ENCODE measurements at regions of chr3 and their contacts with region 1.

Region 1: GRCh38 chr3:16520970-16521881 is 7.7 kb upstream of the RFTN1 start:
- DNase-seq: peak; percentile 53
- H3K4me3 Mint-ChIP-seq: no peak overlapping the region
- H3K27ac Mint-ChIP-seq: peak overlapping the region; percentile 87
- H3K4me1 Mint-ChIP-seq: peaks cover 67% of the 10 kb centered on the region
- H3K27me3 Mint-ChIP-seq: no peaks in the 10 kb centered on the region

Region 2: GRCh38 chr3:15319575-15319974 is 1201.7 kb before region 1 on chr3:
- CTCF ChIA-PET with region 1: no interaction called
- intact Hi-C with region 1: loop called (anchors 10 kb)
- DNase-seq: no peak
- H3K4me3 Mint-ChIP-seq: no peak overlapping the region
- H3K27ac Mint-ChIP-seq: no peak overlapping the region
- H3K4me1 Mint-ChIP-seq: peaks cover 60% of the 10 kb centered on the region
- H3K27me3 Mint-ChIP-seq: no peaks in the 10 kb centered on the region

Region 3: GRCh38 chr3:16012086-16012485 is 509.1 kb before region 1 on chr3:
- CTCF ChIA-PET with region 1: no interaction called
- intact Hi-C with region 1: no loop called
- DNase-seq: no peak
- H3K4me3 Mint-ChIP-seq: no peak overlapping the region
- H3K27ac Mint-ChIP-seq: no peak overlapping the region
- H3K4me1 Mint-ChIP-seq: no peaks in the 10 kb centered on the region
- H3K27me3 Mint-ChIP-seq: peaks cover 3% of the 10 kb centered on the region

Region 4: DNA sequence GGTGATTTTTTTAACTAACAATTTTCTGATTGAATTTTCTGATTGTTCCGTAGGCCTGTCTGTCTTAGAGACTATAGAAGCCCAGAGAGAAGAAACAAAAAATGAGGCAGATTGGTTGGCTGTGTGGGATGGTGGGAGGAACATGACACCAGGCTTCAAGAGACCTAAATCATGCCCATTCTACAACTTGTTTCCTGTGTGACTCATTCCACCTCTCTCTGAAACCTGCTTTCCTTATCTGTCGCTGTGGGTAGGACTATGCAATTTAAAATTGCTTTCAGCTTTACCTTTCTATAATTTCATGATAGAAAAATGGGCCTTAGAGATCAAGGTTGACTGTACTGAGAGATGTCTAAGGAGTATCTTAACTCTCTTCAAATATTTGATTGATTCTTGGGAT is 211.7 kb before region 1 on chr3:
- CTCF ChIA-PET with region 1: no interaction called
- intact Hi-C with region 1: loop called (anchors 1 kb)
- DNase-seq: peak; percentile 76
- H3K4me3 Mint-ChIP-seq: peak overlapping the region; percentile 22
- H3K27ac Mint-ChIP-seq: peak overlapping the region; percentile 92
- H3K4me1 Mint-ChIP-seq: peaks cover 91% of the 10 kb centered on the region
- H3K27me3 Mint-ChIP-seq: no peaks in the 10 kb centered on the region

Region 5: DNA sequence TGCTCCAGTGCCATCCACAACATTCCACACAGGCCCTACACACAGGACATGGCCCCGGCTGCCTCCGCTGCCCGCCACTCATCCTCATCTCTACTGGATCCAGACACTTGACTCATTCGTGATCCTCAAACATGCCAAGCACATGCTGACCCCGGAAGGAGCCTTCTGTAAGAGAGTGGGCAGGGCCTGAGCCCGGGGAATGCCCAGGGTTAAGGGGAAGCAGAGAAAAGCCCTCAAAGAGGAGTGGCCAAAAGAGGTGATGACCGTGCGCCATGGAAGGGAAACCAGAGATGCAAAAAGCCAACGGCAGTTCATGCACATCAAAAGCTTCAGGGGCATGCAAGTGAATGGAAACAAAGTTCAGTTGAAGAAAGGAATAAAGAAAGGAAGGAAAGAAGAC is 53.8 kb before region 1 on chr3:
- CTCF ChIA-PET with region 1: no interaction called
- intact Hi-C with region 1: loop called (anchors 1 kb)
- DNase-seq: peak; percentile 84
- H3K4me3 Mint-ChIP-seq: peak overlapping the region; percentile 50
- H3K27ac Mint-ChIP-seq: peak overlapping the region; percentile 79
- H3K4me1 Mint-ChIP-seq: peaks cover 66% of the 10 kb centered on the region
- H3K27me3 Mint-ChIP-seq: no peaks in the 10 kb centered on the region

Region 6: DNA sequence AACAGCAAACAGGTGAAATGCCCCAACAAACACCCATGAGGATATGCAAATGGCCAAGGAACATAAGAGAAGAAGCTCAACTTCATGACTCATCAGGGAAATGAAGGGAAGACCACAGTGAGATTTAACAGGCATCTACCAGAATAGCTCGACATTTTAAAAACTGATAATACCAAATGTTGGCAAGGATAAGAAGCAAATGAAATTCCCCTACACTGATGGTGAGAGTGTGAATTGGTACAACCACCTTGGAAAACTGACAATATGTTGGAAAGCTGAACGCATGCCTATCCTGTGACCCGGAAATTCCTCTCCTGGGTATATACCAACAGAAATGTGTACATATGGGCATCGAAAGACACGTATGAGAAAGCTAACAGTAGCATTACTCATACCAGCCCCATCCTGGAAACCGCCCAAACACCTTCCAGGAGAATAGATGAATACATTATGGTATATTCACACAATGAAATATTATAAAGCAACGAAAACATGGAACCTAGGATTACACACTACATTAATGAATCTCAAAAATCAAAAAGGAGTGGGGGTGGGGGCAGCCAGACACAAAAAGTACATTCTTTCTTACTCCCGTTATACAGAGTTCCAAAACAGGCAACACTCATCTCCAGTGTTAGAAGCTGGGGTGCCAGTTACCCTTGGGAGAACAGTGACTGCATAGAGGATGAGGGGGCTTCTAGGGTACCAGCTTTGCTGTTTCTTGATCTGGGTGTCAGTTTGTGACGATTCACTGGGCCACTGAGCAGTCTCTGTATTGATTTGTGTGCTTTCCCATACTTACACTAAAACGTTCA is 24.6 kb before region 1 on chr3:
- CTCF ChIA-PET with region 1: no interaction called
- intact Hi-C with region 1: loop called (anchors 1 kb)
- DNase-seq: peak; percentile 60
- H3K4me3 Mint-ChIP-seq: peak overlapping the region; percentile 1
- H3K27ac Mint-ChIP-seq: peak overlapping the region; percentile 46
- H3K4me1 Mint-ChIP-seq: peaks cover 56% of the 10 kb centered on the region
- H3K27me3 Mint-ChIP-seq: no peaks in the 10 kb centered on the region

Region 7: DNA sequence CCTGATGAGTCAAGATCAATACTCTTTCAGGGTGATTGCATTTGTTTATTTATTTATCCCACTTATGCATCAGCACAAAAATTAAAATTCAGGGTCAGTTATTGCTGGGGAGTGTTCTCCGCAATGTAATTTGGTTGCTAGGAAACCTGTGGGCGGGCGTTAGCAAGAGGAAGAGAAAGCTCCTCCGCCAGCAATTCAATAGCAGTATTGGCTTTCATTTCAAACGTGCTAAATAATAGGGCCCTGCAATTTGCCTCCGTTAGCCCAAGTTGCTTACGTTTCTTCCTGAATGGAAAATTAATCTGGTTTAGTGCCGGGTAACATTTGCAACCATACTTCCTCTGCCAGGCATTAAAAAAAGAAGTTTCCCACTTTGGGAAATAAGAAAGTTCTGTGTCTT is 328.0 kb after region 1 on chr3:
- CTCF ChIA-PET with region 1: no interaction called
- intact Hi-C with region 1: no loop called
- DNase-seq: peak; percentile 82
- H3K4me3 Mint-ChIP-seq: peak overlapping the region; percentile 53
- H3K27ac Mint-ChIP-seq: peak overlapping the region; percentile 64
- H3K4me1 Mint-ChIP-seq: peaks cover 37% of the 10 kb centered on the region
- H3K27me3 Mint-ChIP-seq: no peaks in the 10 kb centered on the region

Region 8: DNA sequence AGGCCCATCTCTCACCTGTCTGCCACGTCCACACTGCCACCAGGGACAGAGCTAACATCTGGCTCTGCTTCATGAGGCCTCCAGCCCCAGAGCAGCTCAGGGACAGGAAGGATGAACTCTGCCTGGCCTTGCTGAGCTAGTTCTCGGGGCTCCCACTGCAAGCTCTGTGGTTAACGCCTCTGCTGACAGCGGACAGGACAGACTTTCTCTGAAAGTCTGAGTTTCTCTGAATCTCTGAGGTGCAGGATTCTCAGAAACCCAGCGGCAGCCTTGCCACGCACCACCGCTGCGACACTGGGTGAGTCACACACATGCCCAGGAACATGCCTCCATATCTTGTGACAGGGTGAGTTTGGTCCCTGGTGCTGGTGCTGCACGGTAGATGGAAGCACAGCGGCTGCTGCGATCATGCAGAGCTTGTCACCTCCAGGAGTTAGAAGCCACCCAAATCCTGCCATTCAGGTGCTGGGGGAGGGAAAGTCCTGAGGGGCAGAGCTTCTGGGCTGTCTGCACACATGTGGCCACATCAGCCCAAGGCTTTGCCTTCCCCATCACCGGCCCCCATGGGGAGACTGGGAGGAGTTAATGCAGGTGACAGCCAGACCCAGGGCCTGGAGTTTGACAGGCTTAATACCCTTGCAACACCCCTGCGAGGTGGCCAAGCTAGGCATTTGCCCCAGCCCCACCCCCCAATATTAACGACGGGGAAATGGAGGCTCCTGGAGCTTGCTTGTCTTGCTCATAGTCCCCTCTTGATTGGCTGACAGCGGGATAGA is 630.6 kb after region 1 on chr3:
- CTCF ChIA-PET with region 1: no interaction called
- intact Hi-C with region 1: loop called (anchors 1 kb)
- DNase-seq: peak; percentile 95
- H3K4me3 Mint-ChIP-seq: peak overlapping the region; percentile 28
- H3K27ac Mint-ChIP-seq: peak overlapping the region; percentile 85
- H3K4me1 Mint-ChIP-seq: peaks cover 25% of the 10 kb centered on the region
- H3K27me3 Mint-ChIP-seq: no peaks in the 10 kb centered on the region